Heart right ventricle (tissue), 16 donors: ENCODE measurements at regions of chr21 and their contacts with region 1.

Region 1: GRCh38 chr21:42845296-42845965 is 33.9 kb downstream of the WDR4 start:
- DNase-seq: peak; percentile 45 to 49
- ATAC-seq: peak; percentile 26 to 86 (median 72)
- H3K4me3 ChIP-seq: peak overlapping the region in 1 of 10 donors; percentile 7
- H3K27ac ChIP-seq: peak overlapping the region in 9 of 10 donors; percentile 22 to 77 (median 60)
- H3K4me1 ChIP-seq: peaks cover 0 to 18% (median 11%) of the 10 kb centered on the region in 9 donors
- H3K27me3 ChIP-seq: no peaks in the 10 kb centered on the region
- CTCF ChIP-seq: no peak

Region 2: GRCh38 chr21:42905195-42905594 is 59.8 kb after region 1 on chr21:
- intact Hi-C with region 1: loop called in 1 of 10 experiments (anchors 10 kb)
- DNase-seq: no peak
- ATAC-seq: no peak
- H3K4me3 ChIP-seq: no peak overlapping the region
- H3K27ac ChIP-seq: no peak overlapping the region
- H3K4me1 ChIP-seq: peaks cover 0 to 16% (median 5%) of the 10 kb centered on the region in 9 donors
- H3K27me3 ChIP-seq: no peaks in the 10 kb centered on the region
- CTCF ChIP-seq: no peak

Region 3: DNA sequence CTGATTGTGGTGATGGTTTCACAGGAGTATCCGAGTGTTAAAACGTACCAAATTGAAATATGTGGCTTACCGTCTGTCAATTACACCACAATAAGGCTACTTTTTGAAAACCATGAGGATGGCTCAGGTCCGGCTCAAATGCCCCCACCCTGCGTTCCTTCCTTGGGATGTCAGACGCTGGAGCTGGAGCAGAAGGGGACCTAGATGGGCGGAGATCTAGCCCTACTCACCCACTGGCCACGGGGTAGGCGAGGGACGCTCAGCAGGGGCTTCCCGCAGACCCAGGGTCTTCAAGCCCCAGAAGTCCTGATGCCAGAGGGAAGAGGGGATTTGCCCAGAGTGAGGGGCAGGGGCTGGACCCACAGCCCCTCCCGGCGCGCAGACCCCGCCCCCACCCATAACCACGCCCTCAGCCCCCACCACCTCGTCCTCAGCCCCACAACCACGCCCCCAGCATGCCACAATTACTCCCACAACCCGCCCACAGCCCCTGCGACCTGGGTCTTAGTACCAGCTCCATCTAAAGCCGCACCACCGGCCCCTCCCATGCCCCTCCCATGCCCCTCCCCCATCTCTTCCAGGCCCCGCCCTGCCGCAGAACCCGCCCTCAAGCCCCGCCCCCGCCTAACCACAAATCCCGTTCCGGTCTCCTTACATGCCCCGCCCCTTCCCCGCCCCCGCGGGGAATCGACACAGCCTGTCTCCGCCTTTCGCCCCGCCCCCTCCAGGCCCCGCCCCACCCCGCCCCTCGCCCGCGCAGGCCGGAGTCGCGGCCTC is 1609.5 kb after region 1 on chr21 and contains the start of gene LRRC3:
- intact Hi-C with region 1: no loop called
- DNase-seq: peak; percentile 82 to 90
- ATAC-seq: peak; percentile 85 to 88 (median 87)
- H3K4me3 ChIP-seq: peak within 1 kb of the TSS; percentile 65 to 89 (median 82)
- H3K27ac ChIP-seq: peak within 1 kb of the TSS in 5 of 10 donors; percentile 10 to 65 (median 47)
- H3K4me1 ChIP-seq: peaks cover 0 to 10% (median 6%) of the 10 kb centered on the region in 9 donors
- H3K27me3 ChIP-seq: peaks cover 0 to 13% (median 3%) of the 10 kb centered on the region in 7 donors
- CTCF ChIP-seq: no peak
- total RNA-seq, gene LRRC3: 1.2 to 3.2 (median 2.1) TPM